Activated naive CD4-positive, alpha-beta T cell treated with anti-CD3 and anti-CD28 coated beads for 36 hours (primary cell): ENCODE measurements at regions of chr14 and their contacts with region 1.

Region 1: GRCh38 chr14:68979021-68979782 is at the start of gene ACTN1:
- DNase-seq: peak; percentile 89
- H3K4me3 Mint-ChIP-seq: peak within 1 kb of the TSS; percentile 85
- H3K27ac Mint-ChIP-seq: peak within 1 kb of the TSS; percentile 87
- H3K4me1 Mint-ChIP-seq: peaks cover 32% of the 10 kb centered on the region
- H3K27me3 Mint-ChIP-seq: no peaks in the 10 kb centered on the region
- total RNA-seq, gene ACTN1: 79.7 to 80.6 TPM

Region 2: DNA sequence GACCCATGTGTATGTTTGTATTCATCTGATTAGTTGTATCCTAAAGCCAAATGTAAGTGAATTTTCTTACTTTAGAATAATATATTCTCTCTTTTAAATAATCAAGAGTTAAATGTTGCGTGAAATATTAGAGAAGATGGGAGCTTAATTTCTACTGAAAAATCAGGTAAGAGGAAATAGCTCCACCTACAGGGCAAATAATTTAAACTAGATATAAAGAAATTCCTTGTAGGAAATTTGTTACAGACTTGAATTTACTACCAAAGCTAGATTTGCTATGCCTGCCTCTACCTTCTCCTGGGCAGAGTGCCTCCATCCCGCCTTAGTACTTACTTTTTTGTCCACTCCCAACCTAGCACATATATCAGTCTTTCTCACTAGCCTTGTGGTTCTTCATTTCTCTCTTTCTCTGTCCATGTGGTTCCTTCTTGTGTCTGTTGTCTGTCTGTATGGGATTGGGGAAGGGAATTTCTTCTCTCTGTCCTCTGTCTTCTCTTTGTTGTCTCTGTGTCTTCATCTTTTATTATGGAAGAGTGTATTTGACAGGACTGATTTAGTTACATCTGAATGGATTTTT is 1693.2 kb before region 1 on chr14:
- CTCF ChIA-PET with region 1: no interaction called
- intact Hi-C with region 1: no loop called
- DNase-seq: no peak
- H3K4me3 Mint-ChIP-seq: no peak overlapping the region
- H3K27ac Mint-ChIP-seq: no peak overlapping the region
- H3K4me1 Mint-ChIP-seq: no peaks in the 10 kb centered on the region
- H3K27me3 Mint-ChIP-seq: no peaks in the 10 kb centered on the region

Region 3: DNA sequence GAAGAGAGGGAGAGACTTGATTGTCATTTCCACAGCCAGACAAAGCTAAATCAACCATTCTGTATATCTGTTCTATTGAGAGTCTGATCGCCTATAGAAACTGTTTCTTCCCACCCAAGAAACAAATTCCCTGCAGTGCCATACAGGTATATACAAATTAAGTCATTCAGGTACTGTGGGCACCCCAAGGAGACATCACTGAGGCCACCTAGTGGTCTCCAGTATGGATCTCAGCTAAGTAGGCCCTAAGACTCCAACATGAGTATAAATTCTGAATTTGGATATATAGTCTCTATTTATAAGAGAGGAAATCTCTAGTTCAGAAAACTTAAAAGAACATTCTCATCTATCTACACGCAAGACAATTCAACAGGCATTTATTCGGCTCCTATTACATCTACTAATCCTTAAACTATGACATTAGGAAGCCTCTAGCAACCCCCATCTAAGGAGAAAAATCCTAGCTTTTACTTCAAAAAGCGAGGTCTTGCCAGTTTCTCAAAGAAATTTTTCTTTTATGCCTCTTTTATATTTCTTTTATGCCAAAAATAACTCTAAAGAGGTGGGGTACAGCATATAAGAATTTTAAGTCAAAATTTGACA is 111.1 kb after region 1 on chr14:
- CTCF ChIA-PET with region 1: no interaction called
- intact Hi-C with region 1: loop called (anchors 5 kb)
- DNase-seq: peak; percentile 54
- H3K4me3 Mint-ChIP-seq: no peak overlapping the region
- H3K27ac Mint-ChIP-seq: no peak overlapping the region
- H3K4me1 Mint-ChIP-seq: peaks cover 6% of the 10 kb centered on the region
- H3K27me3 Mint-ChIP-seq: no peaks in the 10 kb centered on the region

Region 4: GRCh38 chr14:69153131-69153872 is 174.1 kb after region 1 on chr14:
- CTCF ChIA-PET with region 1: no interaction called
- intact Hi-C with region 1: loop called (anchors 2 kb)
- DNase-seq: peak; percentile 95
- H3K4me3 Mint-ChIP-seq: peak overlapping the region; percentile 82
- H3K27ac Mint-ChIP-seq: peak overlapping the region; percentile 24
- H3K4me1 Mint-ChIP-seq: peaks cover 31% of the 10 kb centered on the region
- H3K27me3 Mint-ChIP-seq: no peaks in the 10 kb centered on the region

Region 5: GRCh38 chr14:69191340-69192111 is 212.3 kb after region 1 on chr14 and contains the start of gene EXD2:
- CTCF ChIA-PET with region 1: no interaction called
- intact Hi-C with region 1: loop called (anchors 10 kb)
- DNase-seq: peak; percentile 91
- H3K4me3 Mint-ChIP-seq: peak within 1 kb of the TSS; percentile 93
- H3K27ac Mint-ChIP-seq: peak within 1 kb of the TSS; percentile 76
- H3K4me1 Mint-ChIP-seq: peaks cover 23% of the 10 kb centered on the region
- H3K27me3 Mint-ChIP-seq: no peaks in the 10 kb centered on the region
- total RNA-seq, gene EXD2: 11.8 to 12.7 TPM